Psoas muscle (tissue), 8 donors: ENCODE measurements at regions of chr6 and their contacts with region 1.

Region 1: GRCh38 chr6:39777218-39777617 is 15.0 kb upstream of the DAAM2 start:
- DNase-seq: no peak
- ATAC-seq: no peak
- H3K4me3 ChIP-seq: no peak overlapping the region
- H3K27ac ChIP-seq: peak overlapping the region; percentile 57
- H3K4me1 ChIP-seq: peaks cover 18% of the 10 kb centered on the region
- H3K27me3 ChIP-seq: no peaks in the 10 kb centered on the region
- CTCF ChIP-seq: no peak

Region 2: DNA sequence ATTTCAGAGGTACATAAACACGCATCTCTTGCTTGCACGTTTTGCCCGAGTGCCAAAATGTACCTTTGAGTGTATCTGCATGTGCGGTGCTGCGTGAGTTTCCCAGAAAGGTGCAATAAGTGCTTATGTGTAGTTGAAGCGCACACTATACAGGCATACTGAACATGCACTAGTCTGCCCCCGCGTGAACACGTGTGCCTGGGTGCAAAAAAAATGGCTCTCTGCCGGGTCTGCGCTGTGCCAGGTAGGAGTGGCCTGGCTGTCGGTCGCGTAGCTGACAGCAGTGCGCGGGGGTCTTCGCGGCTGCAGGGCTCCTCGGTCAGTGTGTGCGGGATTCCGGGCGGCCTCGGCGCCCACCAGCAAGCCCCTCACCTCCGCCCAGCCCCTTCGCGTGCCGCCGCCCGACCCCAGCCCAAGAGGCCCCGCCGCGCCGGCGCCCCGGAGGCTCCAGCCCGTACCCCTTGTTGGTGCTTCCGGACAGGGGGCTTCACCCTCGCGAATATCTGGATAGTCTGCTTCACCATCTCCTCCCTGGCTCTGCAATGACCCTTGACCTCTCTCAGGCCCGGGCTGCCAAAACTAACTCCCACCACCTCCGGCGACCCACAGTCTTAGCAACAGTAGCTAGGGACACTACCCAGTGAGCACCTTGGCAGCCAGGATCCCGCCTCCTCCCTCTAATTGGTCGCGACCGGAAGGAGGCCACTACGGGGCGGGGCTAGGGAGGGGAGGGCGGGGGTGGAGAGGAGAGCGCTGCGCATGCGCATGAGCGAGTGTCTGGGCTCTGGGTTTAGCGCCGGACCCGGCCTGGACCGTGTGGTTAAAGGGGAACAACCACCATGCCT is 52.2 kb before region 1 on chr6 and contains the start of gene KIF6:
- intact Hi-C with region 1: loop called in 1 of 2 experiments (anchors 5 kb)
- DNase-seq: peak; percentile 92 to 96
- ATAC-seq: peak; percentile 99 to 100 (median 100)
- H3K4me3 ChIP-seq: peak within 1 kb of the TSS; percentile 94
- H3K27ac ChIP-seq: peak within 1 kb of the TSS; percentile 54
- H3K4me1 ChIP-seq: peaks cover 3% of the 10 kb centered on the region
- H3K27me3 ChIP-seq: peaks cover 0 to 3% (median 0%) of the 10 kb centered on the region in 3 donors
- CTCF ChIP-seq: no peak
- total RNA-seq, gene KIF6: 0.14 to 0.17 TPM in 2 of 4 donors, not detected in the others